ENCODE measurements at regions of chr7 and their contacts with region 1.

Region 1: GRCh38 chr7:2477447-2478398 is 1.5 kb upstream of the GRIFIN start:
- DNase-seq: peak; percentile 30 to 84 (median 63)
- ATAC-seq: peak; percentile 94
- H3K4me3 ChIP-seq: no peak overlapping the region
- H3K4me3 Mint-ChIP-seq: no peak overlapping the region
- H3K27ac ChIP-seq: no peak overlapping the region
- H3K27ac Mint-ChIP-seq: no peak overlapping the region
- H3K4me1 ChIP-seq: peaks cover 15% of the 10 kb centered on the region
- H3K4me1 Mint-ChIP-seq: no peaks in the 10 kb centered on the region
- H3K27me3 ChIP-seq: no peaks in the 10 kb centered on the region
- H3K27me3 Mint-ChIP-seq: no peaks in the 10 kb centered on the region
- CTCF ChIP-seq: peak; percentile 52

Region 2: GRCh38 chr7:1912593-1913465 is 564.9 kb before region 1 on chr7:
- CTCF ChIA-PET with region 1: no interaction called
- POLR2A ChIA-PET with region 1: no interaction called
- intact Hi-C with region 1: no loop called
- DNase-seq: peak in 1 of 9 experiments; percentile 15
- ATAC-seq: no peak
- H3K4me3 ChIP-seq: no peak overlapping the region
- H3K4me3 Mint-ChIP-seq: no peak overlapping the region
- H3K27ac ChIP-seq: no peak overlapping the region
- H3K27ac Mint-ChIP-seq: peak overlapping the region; percentile 57
- H3K4me1 ChIP-seq: peaks cover 9% of the 10 kb centered on the region
- H3K4me1 Mint-ChIP-seq: peaks cover 46% of the 10 kb centered on the region
- H3K27me3 ChIP-seq: no peaks in the 10 kb centered on the region
- H3K27me3 Mint-ChIP-seq: no peaks in the 10 kb centered on the region
- CTCF ChIP-seq: no peak

Region 3: GRCh38 chr7:2519119-2519930 is 41.6 kb after region 1 on chr7 and contains the start of gene LFNG:
- CTCF ChIA-PET with region 1: no interaction called
- POLR2A ChIA-PET with region 1: no interaction called
- intact Hi-C with region 1: loop called in 1 of 2 experiments (anchors 1 kb)
- DNase-seq: peak; percentile 58 to 94 (median 85)
- ATAC-seq: peak; percentile 63
- H3K4me3 ChIP-seq: peak within 1 kb of the TSS; percentile 98 to 100
- H3K4me3 Mint-ChIP-seq: peak within 1 kb of the TSS; percentile 96
- H3K27ac ChIP-seq: peak within 1 kb of the TSS; percentile 53 to 63
- H3K27ac Mint-ChIP-seq: peak within 1 kb of the TSS; percentile 94
- H3K4me1 ChIP-seq: peaks cover 37% of the 10 kb centered on the region
- H3K4me1 Mint-ChIP-seq: peaks cover 44% of the 10 kb centered on the region
- H3K27me3 ChIP-seq: no peaks in the 10 kb centered on the region
- H3K27me3 Mint-ChIP-seq: no peaks in the 10 kb centered on the region
- CTCF ChIP-seq: no peak
- total RNA-seq, gene LFNG: 137 to 140 TPM

Region 4: GRCh38 chr7:2529161-2530070 is 51.7 kb after region 1 on chr7:
- CTCF ChIA-PET with region 1: interaction called, 12 read pairs
- POLR2A ChIA-PET with region 1: no interaction called
- intact Hi-C with region 1: loop called in 1 of 2 experiments (anchors 2 kb)
- DNase-seq: peak in 7 of 9 experiments; percentile 47 to 88 (median 70)
- ATAC-seq: peak; percentile 26
- H3K4me3 ChIP-seq: peak overlapping the region; percentile 46 to 63
- H3K4me3 Mint-ChIP-seq: peak overlapping the region; percentile 79
- H3K27ac ChIP-seq: peak overlapping the region; percentile 71 to 91
- H3K27ac Mint-ChIP-seq: peak overlapping the region; percentile 95
- H3K4me1 ChIP-seq: peaks cover 67% of the 10 kb centered on the region
- H3K4me1 Mint-ChIP-seq: peaks cover 55% of the 10 kb centered on the region
- H3K27me3 ChIP-seq: no peaks in the 10 kb centered on the region
- H3K27me3 Mint-ChIP-seq: no peaks in the 10 kb centered on the region
- CTCF ChIP-seq: no peak

Region 5: DNA sequence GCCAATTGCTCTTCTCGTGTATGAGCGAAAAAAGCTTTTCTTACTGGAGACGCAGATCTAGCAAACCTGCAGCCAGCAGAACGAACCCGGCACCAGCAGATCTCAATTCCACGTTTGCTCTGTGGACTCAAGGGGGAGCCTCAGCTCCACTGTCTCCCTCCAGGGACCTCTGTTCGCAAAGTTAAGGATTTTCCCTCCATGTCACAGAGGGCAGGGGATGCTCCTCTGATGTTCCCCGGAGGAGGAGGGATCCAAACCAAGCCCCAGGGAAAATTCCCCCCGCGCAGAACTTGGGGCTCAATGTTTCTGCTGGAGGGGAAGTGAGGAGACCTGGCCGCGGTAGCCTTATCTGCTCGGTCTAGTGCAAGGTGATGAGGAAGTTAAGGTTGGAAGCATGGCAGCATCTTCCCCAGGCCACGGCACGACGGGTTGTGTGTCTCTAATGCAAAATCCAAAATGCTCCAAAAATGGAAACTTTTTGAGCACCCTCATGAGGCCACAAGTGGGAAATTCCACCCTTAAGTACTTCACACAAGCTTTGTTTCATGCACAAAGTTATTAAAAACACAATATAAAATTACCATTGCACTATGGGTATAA is 90.1 kb after region 1 on chr7:
- CTCF ChIA-PET with region 1: interaction called, 9 read pairs
- POLR2A ChIA-PET with region 1: interaction called, 3 read pairs
- intact Hi-C with region 1: loop called in 1 of 2 experiments (anchors 1 kb)
- DNase-seq: peak in 1 of 9 experiments; percentile 44
- ATAC-seq: no peak
- H3K4me3 ChIP-seq: no peak overlapping the region
- H3K4me3 Mint-ChIP-seq: no peak overlapping the region
- H3K27ac ChIP-seq: no peak overlapping the region
- H3K27ac Mint-ChIP-seq: no peak overlapping the region
- H3K4me1 ChIP-seq: no peaks in the 10 kb centered on the region
- H3K4me1 Mint-ChIP-seq: peaks cover 2% of the 10 kb centered on the region
- H3K27me3 ChIP-seq: no peaks in the 10 kb centered on the region
- H3K27me3 Mint-ChIP-seq: no peaks in the 10 kb centered on the region
- CTCF ChIP-seq: no peak

Region 6: GRCh38 chr7:2665359-2665791 is 187.7 kb after region 1 on chr7:
- CTCF ChIA-PET with region 1: no interaction called
- POLR2A ChIA-PET with region 1: no interaction called
- intact Hi-C with region 1: loop called in 1 of 2 experiments (anchors 1 kb)
- DNase-seq: peak in 1 of 9 experiments; percentile 20
- ATAC-seq: no peak
- H3K4me3 ChIP-seq: no peak overlapping the region
- H3K4me3 Mint-ChIP-seq: no peak overlapping the region
- H3K27ac ChIP-seq: no peak overlapping the region
- H3K27ac Mint-ChIP-seq: no peak overlapping the region
- H3K4me1 ChIP-seq: no peaks in the 10 kb centered on the region
- H3K4me1 Mint-ChIP-seq: peaks cover 2% of the 10 kb centered on the region
- H3K27me3 ChIP-seq: peaks cover 0 to 2% of the 10 kb centered on the region in 2 experiments
- H3K27me3 Mint-ChIP-seq: peaks cover 21% of the 10 kb centered on the region
- CTCF ChIP-seq: no peak

Region 7: DNA sequence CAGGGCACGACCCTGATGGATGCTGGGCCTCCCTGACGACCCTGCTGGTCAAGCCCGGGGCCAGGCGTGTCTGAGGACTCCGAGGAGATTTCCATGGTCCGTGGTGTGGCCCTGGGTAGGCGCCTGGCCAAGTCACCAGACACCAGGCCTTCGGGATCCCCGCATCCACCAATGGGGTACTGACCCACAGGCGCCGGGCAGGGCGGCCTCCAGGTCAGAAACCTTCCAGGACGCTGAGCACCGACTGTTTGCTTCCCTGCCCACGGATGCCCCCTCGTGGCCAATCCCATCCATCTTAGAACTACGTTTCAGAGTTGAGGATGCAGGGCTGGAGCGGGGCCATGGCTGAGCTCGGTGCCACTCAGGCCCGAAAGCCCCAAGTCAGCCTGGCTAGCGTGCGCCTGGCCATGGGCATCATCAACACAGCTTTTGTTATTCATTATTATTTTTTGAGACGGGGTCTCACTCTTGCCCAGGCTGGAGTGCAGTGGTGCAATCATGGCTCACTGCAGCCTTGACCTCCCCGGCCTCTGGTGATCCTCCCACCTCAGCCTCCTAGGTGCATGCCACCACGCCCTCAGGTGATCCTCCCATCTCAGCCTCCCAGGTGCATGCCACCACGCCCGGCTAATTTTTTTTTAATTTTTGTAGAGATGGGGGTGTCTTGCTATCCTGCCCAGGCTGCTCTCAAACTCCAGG is 203.2 kb after region 1 on chr7:
- CTCF ChIA-PET with region 1: interaction called, 4 read pairs
- POLR2A ChIA-PET with region 1: no interaction called
- intact Hi-C with region 1: loop called in 1 of 2 experiments (anchors 1 kb)
- DNase-seq: peak in 7 of 9 experiments; percentile 22 to 71 (median 60)
- ATAC-seq: no peak
- H3K4me3 ChIP-seq: no peak overlapping the region
- H3K4me3 Mint-ChIP-seq: no peak overlapping the region
- H3K27ac ChIP-seq: no peak overlapping the region
- H3K27ac Mint-ChIP-seq: no peak overlapping the region
- H3K4me1 ChIP-seq: no peaks in the 10 kb centered on the region
- H3K4me1 Mint-ChIP-seq: no peaks in the 10 kb centered on the region
- H3K27me3 ChIP-seq: peaks cover 0 to 3% of the 10 kb centered on the region in 2 experiments
- H3K27me3 Mint-ChIP-seq: peaks cover 9% of the 10 kb centered on the region
- CTCF ChIP-seq: peak; percentile 37

Measured in CD8-positive, alpha-beta T cell (primary cell).